H1 (cell line): ENCODE measurements at regions of chr11 and their contacts with region 1.

Region 1: DNA sequence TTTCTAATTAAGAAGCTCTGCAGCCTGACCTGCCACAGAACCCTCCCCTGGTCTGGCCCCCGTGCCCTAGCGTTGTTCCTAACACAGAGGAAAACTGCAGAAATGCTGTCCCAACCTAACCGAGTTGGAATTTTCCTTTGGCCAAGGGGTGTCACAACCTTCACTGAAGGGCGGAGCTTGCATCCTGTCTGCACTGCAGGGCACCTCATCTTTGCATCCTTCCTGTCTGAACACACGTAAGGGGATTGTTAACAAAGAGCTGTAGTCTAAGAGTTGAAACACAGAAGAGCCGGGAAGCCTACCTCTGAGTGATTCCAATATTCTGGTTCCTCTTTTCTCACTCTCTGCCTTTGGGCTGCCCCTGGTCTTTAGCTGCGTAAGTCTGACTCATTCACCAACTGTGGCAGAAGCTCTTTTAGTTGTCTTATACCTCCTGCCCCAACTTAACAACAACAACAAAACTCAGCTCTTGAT is 1.6 kb downstream of the DIXDC1 start:
- DNase-seq: no peak
- H3K4me3 ChIP-seq: peak overlapping the region in 2 of 4 experiments; percentile 2 to 70; a peak in 2 of 8 replicates
- H3K27ac ChIP-seq: no peak overlapping the region
- H3K4me1 ChIP-seq: peaks cover 12 to 22% (median 12%) of the 10 kb centered on the region in 4 experiments
- H3K27me3 ChIP-seq: no peaks in the 10 kb centered on the region
- CTCF ChIP-seq: no peak
- EP300 ChIP-seq: no peak
- POLR2A ChIP-seq: peak in 1 of 2 experiments; percentile 24; a peak in 1 of 3 replicates
- RAD21 ChIP-seq: no peak

Region 2: GRCh38 chr11:111870886-111871692 is 67.6 kb before region 1 on chr11 and contains the start of gene ALG9:
- CTCF ChIA-PET with region 1: interaction called, 12 read pairs
- POLR2A ChIA-PET with region 1: interaction called, 3 read pairs
- DNase-seq: peak; percentile 31 to 90
- H3K4me3 ChIP-seq: peak within 1 kb of the TSS; percentile 69 to 88 (median 84)
- H3K27ac ChIP-seq: no peak within 1 kb of the TSS; the same call in 1 of the 2 replicates
- H3K4me1 ChIP-seq: no peaks in the 10 kb centered on the region; a peak in 1 of 7 replicates
- H3K27me3 ChIP-seq: no peaks in the 10 kb centered on the region; a peak in 1 of 7 replicates
- CTCF ChIP-seq: peak; percentile 12 to 37 (median 18); a peak in 3 of 4 replicates
- EP300 ChIP-seq: no peak
- POLR2A ChIP-seq: peak in 1 of 2 experiments; percentile 64; a peak in 2 of 3 replicates
- RAD21 ChIP-seq: no peak
- total RNA-seq, gene ALG9: 16.4 and 23.5 TPM in 2 replicates

Region 3: GRCh38 chr11:111926505-111927391 is 12.0 kb before region 1 on chr11:
- CTCF ChIA-PET with region 1: interaction called, 61 read pairs
- POLR2A ChIA-PET with region 1: interaction called, 21 read pairs
- DNase-seq: peak; percentile 94 to 97
- H3K4me3 ChIP-seq: peak overlapping the region; percentile 47 to 70 (median 58); a peak in 7 of 8 replicates
- H3K27ac ChIP-seq: peak overlapping the region; percentile 75
- H3K4me1 ChIP-seq: peaks cover 0 to 10% (median 3%) of the 10 kb centered on the region in 4 experiments; a peak in 5 of 7 replicates
- H3K27me3 ChIP-seq: no peaks in the 10 kb centered on the region; a peak in 1 of 7 replicates
- CTCF ChIP-seq: peak in 1 of 3 experiments; percentile 2; a peak in 1 of 4 replicates
- EP300 ChIP-seq: no peak
- POLR2A ChIP-seq: peak; percentile 15 to 82
- RAD21 ChIP-seq: no peak

Region 4: DNA sequence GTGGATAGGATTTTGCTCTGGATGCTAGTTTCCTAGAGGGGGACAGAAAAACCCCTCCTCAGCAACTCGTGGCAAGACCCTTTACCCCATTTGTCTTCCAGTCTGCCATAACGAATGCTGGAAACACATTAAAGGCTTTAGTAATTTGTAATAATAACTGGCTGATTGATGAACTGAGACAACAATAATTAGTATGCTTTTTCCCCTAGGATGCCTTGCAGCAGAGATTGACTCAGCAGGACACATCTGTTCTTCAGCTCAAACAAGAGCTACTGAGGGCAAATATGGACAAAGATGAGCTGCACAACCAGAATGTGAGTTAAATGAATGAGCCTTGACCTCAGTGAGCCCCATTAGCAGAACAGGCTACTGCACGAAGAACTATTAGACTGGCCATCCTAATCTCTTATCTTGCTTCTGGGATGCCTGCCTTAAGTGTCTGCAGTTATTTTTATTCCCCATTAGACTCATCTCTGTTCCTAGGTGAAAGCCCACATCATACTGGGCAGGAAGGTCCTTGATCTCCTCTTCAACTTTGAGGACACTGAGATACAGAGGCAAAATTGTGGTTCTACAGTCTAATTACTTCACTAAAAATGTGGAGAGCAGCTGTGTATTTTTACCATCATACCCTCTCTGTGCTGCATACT is 53.6 kb after region 1 on chr11:
- CTCF ChIA-PET with region 1: interaction called, 565 read pairs
- POLR2A ChIA-PET with region 1: no interaction called
- DNase-seq: no peak
- H3K4me3 ChIP-seq: no peak overlapping the region
- H3K27ac ChIP-seq: no peak overlapping the region
- H3K4me1 ChIP-seq: no peaks in the 10 kb centered on the region
- H3K27me3 ChIP-seq: no peaks in the 10 kb centered on the region
- CTCF ChIP-seq: no peak
- EP300 ChIP-seq: no peak
- POLR2A ChIP-seq: no peak
- RAD21 ChIP-seq: no peak